ENCODE measurements at regions of chr6 and their contacts with region 1.

Region 1: GRCh38 chr6:24861934-24862333 is 63.2 kb upstream of the ARMH2 start:
- DNase-seq: no peak
- H3K4me3 ChIP-seq: no peak overlapping the region
- H3K27ac ChIP-seq: no peak overlapping the region
- H3K4me1 ChIP-seq: peaks cover 20% of the 10 kb centered on the region
- H3K27me3 ChIP-seq: no peaks in the 10 kb centered on the region
- CTCF ChIP-seq: no peak

Region 2: DNA sequence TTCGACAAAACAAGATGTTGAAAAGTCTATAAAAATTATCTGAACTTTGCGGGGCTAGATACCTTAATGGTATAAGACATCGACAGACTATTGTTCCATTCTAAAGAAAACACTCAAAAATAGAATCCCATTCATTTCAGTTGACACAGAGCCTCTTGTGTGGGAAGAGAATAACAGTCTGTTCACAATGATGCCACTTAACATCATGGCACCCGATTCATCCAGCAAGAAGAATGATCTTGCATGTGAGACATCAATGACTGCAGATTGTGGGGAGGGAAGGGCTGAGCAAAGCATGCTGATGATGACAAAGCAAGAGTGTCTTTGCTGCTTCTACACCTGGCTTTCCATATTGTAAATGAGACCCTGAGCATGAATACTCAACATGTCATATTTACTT is 13.5 kb before region 1 on chr6:
- CTCF ChIA-PET with region 1: no interaction called
- POLR2A ChIA-PET with region 1: no interaction called
- intact Hi-C with region 1: no loop called
- DNase-seq: no peak
- H3K4me3 ChIP-seq: no peak overlapping the region
- H3K27ac ChIP-seq: no peak overlapping the region
- H3K4me1 ChIP-seq: no peaks in the 10 kb centered on the region
- H3K27me3 ChIP-seq: no peaks in the 10 kb centered on the region
- CTCF ChIP-seq: no peak

Region 3: GRCh38 chr6:25085756-25086155 is 223.8 kb after region 1 on chr6:
- CTCF ChIA-PET with region 1: interaction called, 10 read pairs
- POLR2A ChIA-PET with region 1: no interaction called
- intact Hi-C with region 1: no loop called
- DNase-seq: no peak
- H3K4me3 ChIP-seq: no peak overlapping the region
- H3K27ac ChIP-seq: no peak overlapping the region
- H3K4me1 ChIP-seq: no peaks in the 10 kb centered on the region
- H3K27me3 ChIP-seq: no peaks in the 10 kb centered on the region
- CTCF ChIP-seq: no peak